ENCODE measurements at regions of chr4 and their contacts with region 1.

Region 1: DNA sequence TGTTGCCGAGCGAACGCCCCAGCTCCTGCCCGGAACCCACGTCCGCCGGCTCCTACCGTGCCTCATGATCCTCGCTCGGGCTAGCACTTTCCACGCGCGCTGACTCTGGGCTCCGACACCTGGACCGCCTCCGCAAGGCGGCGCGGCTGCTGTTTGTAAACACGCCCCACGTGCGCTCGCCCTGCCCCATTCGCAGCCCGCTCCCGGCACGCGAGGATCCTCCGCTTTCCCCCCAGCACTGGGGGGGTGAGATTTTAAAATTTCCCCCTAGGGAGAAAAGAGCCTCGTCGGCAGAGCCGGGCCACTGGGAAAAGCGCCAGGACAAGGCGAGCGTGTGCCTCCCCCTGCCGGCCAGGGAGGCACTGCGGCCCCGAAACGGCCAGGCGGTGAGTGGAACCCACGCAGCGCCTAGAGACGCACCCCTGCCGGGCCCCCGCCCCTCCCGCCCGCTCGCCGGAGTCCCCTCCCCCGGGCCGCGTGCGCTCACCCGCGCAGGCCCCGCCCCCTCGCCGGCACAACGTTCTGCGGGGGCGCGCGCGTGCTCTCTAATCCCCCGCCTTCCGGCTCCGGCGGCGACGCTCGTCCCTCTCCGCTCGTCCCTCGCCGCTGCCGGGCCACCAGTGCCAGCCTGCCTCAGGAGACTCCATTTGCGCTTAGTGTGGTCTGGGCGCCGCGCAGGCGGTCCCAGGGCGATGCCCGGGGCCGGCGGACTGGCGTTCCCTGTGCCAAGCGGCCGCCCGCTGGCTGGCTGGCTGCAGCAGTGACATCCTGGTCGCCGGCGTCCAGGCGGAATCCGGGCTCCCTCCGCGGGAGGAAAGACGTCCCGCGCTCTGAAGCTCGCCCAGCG is at the start of gene TIGD2:
- DNase-seq: peak; percentile 88 to 93 (median 91)
- ATAC-seq: peak; percentile 94 to 99 (median 98)
- H3K4me3 ChIP-seq: peak within 1 kb of the TSS; percentile 32 to 91 (median 78)
- H3K27ac ChIP-seq: peak within 1 kb of the TSS in 11 of 12 donors; percentile 65 to 91 (median 85)
- H3K4me1 ChIP-seq: peaks cover 0 to 27% (median 11%) of the 10 kb centered on the region in 12 donors
- H3K27me3 ChIP-seq: peaks cover 0 to 13% (median 0%) of the 10 kb centered on the region in 9 donors
- CTCF ChIP-seq: peak; percentile 68 to 98 (median 84)
- POLR2A ChIP-seq: peak in 1 of 2 donors; percentile 71
- total RNA-seq, gene TIGD2: 1.6 to 3.9 (median 2.3) TPM

Region 2: DNA sequence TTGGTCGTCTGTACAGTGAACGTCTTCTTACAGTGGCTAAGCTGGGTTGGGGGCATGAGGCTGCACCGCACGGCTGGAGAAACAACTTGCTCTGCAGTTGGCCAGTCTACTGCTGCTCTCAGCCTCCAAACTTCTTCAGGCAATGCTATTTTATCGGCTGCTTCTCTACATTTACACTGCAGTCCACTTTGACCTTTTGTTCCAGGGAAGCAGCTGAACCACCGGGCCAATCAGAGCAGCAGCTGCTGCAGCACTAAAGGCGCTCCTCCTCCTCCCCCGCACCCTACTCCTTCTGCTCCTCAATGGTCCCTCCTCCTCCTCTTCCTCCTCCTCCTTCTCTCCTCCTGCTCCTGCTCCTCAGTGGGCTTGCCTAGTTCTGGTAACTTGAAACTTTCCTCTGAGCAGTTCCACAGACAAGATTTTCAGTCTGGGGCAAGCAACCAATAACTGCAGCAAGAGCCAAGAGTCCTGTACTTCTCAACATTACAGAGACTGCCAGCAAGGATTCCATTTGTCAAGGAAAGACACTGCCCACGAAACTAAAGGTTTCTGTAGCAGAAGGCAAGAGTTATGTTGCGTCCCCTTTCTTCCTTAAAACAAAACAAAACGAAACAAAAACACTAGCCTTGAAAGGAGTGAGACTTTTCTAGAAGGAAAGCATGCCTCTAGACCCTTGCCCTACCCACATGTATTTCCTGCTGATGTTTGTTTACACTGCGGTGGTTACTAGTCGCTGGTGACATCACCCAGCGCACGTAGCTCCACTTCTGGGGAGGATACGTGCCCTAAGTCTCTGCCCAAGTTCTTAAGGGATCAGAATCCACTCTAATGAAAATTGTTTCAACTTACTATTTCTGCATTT is 287.9 kb before region 1 on chr4:
- intact Hi-C with region 1: loop called in 4 of 10 experiments (anchors 2 to 5 kb)
- DNase-seq: peak; percentile 89 to 93 (median 89)
- ATAC-seq: peak; percentile 93 to 99 (median 97)
- H3K4me3 ChIP-seq: peak overlapping the region; percentile 39 to 83 (median 62)
- H3K27ac ChIP-seq: peak overlapping the region; percentile 73 to 93 (median 86)
- H3K4me1 ChIP-seq: peaks cover 0 to 51% (median 26%) of the 10 kb centered on the region in 12 donors
- H3K27me3 ChIP-seq: no peaks in the 10 kb centered on the region
- CTCF ChIP-seq: no peak
- POLR2A ChIP-seq: peak in 1 of 2 donors; percentile 63

Region 3: GRCh38 chr4:88828842-88829571 is 282.2 kb before region 1 on chr4:
- intact Hi-C with region 1: loop called in 2 of 10 experiments (anchors 5 kb)
- DNase-seq: no peak
- ATAC-seq: no peak
- H3K4me3 ChIP-seq: no peak overlapping the region
- H3K27ac ChIP-seq: peak overlapping the region in 3 of 12 donors; percentile 8 to 44 (median 25)
- H3K4me1 ChIP-seq: peaks cover 0 to 20% (median 0%) of the 10 kb centered on the region in 12 donors
- H3K27me3 ChIP-seq: no peaks in the 10 kb centered on the region
- CTCF ChIP-seq: no peak
- POLR2A ChIP-seq: no peak

Region 4: DNA sequence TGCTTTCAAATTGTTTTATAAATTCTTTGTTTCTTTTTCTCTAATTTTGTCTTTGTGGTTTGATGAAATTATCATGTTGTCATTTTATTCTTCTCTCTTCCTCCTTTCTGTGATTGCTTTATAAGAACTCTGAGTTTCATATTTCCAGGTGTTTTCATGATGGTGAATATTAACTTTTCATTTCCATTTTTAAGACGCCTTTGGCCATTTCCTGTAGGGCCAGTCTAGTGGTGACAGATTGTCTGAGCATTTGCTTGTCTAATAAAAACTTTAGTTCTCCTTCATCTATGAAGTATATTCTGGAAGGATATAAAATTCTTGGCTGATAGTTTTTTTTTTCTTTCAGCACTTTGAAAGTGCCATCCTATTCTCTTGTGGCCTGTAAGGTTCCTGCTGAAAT is 182.4 kb before region 1 on chr4:
- intact Hi-C with region 1: no loop called
- DNase-seq: no peak
- ATAC-seq: no peak
- H3K4me3 ChIP-seq: no peak overlapping the region
- H3K27ac ChIP-seq: no peak overlapping the region
- H3K4me1 ChIP-seq: no peaks in the 10 kb centered on the region
- H3K27me3 ChIP-seq: no peaks in the 10 kb centered on the region
- CTCF ChIP-seq: no peak
- POLR2A ChIP-seq: no peak

Region 5: DNA sequence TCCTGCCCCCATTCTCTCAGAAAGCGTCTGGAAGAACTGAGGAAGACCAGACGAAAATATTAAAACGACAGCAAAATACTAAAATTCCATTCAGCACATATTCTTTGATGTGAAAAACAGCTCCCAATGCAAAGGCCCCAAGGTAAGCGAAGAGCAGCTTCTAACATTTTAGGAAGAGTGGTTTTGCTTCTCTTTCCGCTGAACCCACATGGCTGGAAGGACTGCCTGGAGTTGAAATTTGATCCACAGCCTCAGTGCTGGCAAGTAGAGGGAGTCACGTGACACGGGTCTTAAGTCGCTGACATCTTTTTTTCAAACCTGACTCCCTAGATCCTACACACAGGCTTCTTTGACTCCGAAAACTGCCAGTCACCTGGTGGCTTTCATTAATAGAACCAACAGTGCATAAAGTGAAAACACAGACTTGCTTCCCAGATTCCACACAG is 54.2 kb before region 1 on chr4 and contains the start of gene FAM13A:
- intact Hi-C with region 1: loop called in 1 of 10 experiments (anchors 5 kb)
- DNase-seq: peak; percentile 63 to 85 (median 77)
- ATAC-seq: peak; percentile 94 to 98 (median 95)
- H3K4me3 ChIP-seq: peak within 1 kb of the TSS; percentile 18 to 61 (median 48)
- H3K27ac ChIP-seq: peak within 1 kb of the TSS in 11 of 12 donors; percentile 1 to 73 (median 38)
- H3K4me1 ChIP-seq: peaks cover 0 to 22% (median 4%) of the 10 kb centered on the region in 12 donors
- H3K27me3 ChIP-seq: no peaks in the 10 kb centered on the region
- CTCF ChIP-seq: no peak
- POLR2A ChIP-seq: peak in 1 of 2 donors; percentile 18
- total RNA-seq, gene FAM13A: 7.0 to 30.4 (median 11.7) TPM